ENCODE measurements at regions of chr12 and their contacts with region 1.

Region 1: GRCh38 chr12:111196532-111196931 is 172.4 kb downstream of the PHETA1 start:
- DNase-seq: no peak
- H3K4me3 Mint-ChIP-seq: no peak overlapping the region
- H3K27ac Mint-ChIP-seq: no peak overlapping the region
- H3K4me1 Mint-ChIP-seq: no peaks in the 10 kb centered on the region
- H3K27me3 Mint-ChIP-seq: peaks cover 97% of the 10 kb centered on the region
- CTCF ChIP-seq: no peak

Region 2: DNA sequence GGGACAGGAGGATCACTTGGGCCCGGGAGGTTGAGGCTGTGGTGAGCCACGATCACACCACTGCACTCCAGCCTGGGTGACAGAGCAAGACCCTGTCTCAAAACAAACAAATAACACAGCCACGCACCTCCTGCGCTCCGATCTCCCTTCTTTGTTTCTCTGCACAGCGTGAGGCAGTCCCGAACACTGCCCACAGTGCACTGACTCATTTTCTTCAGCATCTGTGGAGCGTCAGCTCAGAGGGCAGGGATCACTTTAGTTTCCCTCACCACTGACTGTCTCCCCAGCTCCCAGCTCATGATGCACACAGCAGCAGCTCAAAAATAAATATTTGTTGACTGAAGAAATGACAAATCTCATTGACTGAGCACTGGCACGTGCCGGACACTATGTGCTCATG is 275.3 kb before region 1 on chr12:
- CTCF ChIA-PET with region 1: no interaction called
- intact Hi-C with region 1: loop called (anchors 10 kb)
- DNase-seq: no peak
- H3K4me3 Mint-ChIP-seq: no peak overlapping the region
- H3K27ac Mint-ChIP-seq: no peak overlapping the region
- H3K4me1 Mint-ChIP-seq: peaks cover 7% of the 10 kb centered on the region
- H3K27me3 Mint-ChIP-seq: peaks cover 73% of the 10 kb centered on the region
- CTCF ChIP-seq: no peak

Region 3: DNA sequence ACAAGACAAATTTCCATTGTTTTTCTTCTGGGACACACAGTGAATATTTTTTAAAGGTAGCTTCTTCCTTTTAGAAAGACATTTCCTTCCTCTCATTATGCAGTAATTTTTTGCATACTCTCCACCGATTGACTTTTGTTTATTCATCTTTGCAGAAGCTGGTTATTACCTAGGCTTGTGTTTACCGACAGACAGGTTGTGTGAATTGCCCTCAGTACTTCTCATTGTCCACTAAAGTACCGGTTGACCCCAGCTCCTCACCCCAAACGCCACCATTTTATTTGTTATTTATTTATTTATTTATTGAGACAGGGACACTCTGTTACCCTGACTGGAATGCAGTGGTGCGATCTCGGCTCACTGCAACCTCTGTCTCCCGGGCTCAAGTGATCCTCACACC is 212.7 kb before region 1 on chr12:
- CTCF ChIA-PET with region 1: no interaction called
- intact Hi-C with region 1: no loop called
- DNase-seq: no peak
- H3K4me3 Mint-ChIP-seq: no peak overlapping the region
- H3K27ac Mint-ChIP-seq: no peak overlapping the region
- H3K4me1 Mint-ChIP-seq: no peaks in the 10 kb centered on the region
- H3K27me3 Mint-ChIP-seq: peaks cover 95% of the 10 kb centered on the region
- CTCF ChIP-seq: no peak